MCF 10A (cell line): ENCODE measurements at regions of chr15 and their contacts with region 1.

Region 1: GRCh38 chr15:100918034-100918689 is 995 bp upstream of the LRRK1 start:
- DNase-seq: peak; percentile 85
- H3K4me3 Mint-ChIP-seq: peak overlapping the region; percentile 91
- H3K27ac Mint-ChIP-seq: peak overlapping the region; percentile 64
- H3K4me1 Mint-ChIP-seq: peaks cover 19% of the 10 kb centered on the region
- H3K27me3 Mint-ChIP-seq: no peaks in the 10 kb centered on the region
- CTCF ChIP-seq: peak; percentile 89

Region 2: GRCh38 chr15:100588638-100589242 is 329.4 kb before region 1 on chr15:
- CTCF ChIA-PET with region 1: no interaction called
- POLR2A ChIA-PET with region 1: no interaction called
- intact Hi-C with region 1: no loop called
- DNase-seq: peak; percentile 28
- H3K4me3 Mint-ChIP-seq: no peak overlapping the region
- H3K27ac Mint-ChIP-seq: no peak overlapping the region
- H3K4me1 Mint-ChIP-seq: no peaks in the 10 kb centered on the region
- H3K27me3 Mint-ChIP-seq: no peaks in the 10 kb centered on the region
- CTCF ChIP-seq: no peak

Region 3: DNA sequence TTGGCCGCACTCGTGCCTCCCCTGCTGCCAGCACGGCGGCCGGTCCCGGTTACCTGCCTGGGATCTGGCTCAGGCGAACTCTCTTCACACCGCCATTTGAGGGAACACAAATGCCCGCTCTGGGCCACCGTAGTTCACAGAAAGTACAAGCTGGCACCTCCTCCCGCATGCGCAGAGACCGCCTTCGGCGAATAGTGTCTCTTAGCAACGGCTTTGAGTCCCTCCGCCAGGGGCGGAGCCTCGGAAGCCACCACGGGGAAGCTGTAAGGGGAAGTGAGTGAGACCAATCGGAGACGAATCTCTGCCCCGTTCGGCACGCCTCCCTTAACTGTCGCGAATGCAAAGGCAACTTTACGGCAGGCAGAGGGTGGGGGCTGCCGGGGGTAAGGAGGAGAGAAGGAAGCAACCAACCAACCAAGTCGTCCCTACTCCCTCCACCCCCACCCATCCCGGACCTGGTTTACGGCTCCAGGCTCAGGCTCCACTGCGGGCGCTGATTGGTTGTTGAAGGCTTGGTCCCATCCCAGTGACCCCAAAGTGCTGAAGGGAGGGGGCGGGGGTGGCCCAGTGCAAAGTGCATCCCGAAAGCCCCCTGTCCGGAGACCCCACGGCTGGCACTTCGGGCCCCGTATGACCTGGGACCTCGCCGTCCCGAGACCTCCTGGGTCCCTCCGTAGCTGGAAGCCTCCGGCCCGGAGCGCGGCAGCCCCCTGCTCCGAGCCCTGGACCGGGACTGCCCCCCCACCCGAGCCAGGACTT is 315.9 kb before region 1 on chr15 and contains the starts of genes ASB7 and LINS1:
- CTCF ChIA-PET with region 1: interaction called, 7 read pairs
- POLR2A ChIA-PET with region 1: interaction called, 12 read pairs
- intact Hi-C with region 1: no loop called
- DNase-seq: peak; percentile 100
- H3K4me3 Mint-ChIP-seq: no peak within 1 kb of the TSS
- H3K27ac Mint-ChIP-seq: no peak within 1 kb of the TSS
- H3K4me1 Mint-ChIP-seq: peaks cover 22% of the 10 kb centered on the region
- H3K27me3 Mint-ChIP-seq: no peaks in the 10 kb centered on the region
- CTCF ChIP-seq: no peak
- total RNA-seq, gene ASB7: 14.3 and 19.2 TPM in 2 replicates
- total RNA-seq, gene LINS1: 13.9 and 15.1 TPM in 2 replicates

Region 4: GRCh38 chr15:100879464-100880138 is 38.6 kb before region 1 on chr15 and contains the start of gene ALDH1A3:
- CTCF ChIA-PET with region 1: interaction called, 8 read pairs
- POLR2A ChIA-PET with region 1: no interaction called
- intact Hi-C with region 1: loop called (anchors 5 kb)
- DNase-seq: peak; percentile 81
- H3K4me3 Mint-ChIP-seq: peak within 1 kb of the TSS; percentile 63
- H3K27ac Mint-ChIP-seq: no peak within 1 kb of the TSS
- H3K4me1 Mint-ChIP-seq: no peaks in the 10 kb centered on the region
- H3K27me3 Mint-ChIP-seq: no peaks in the 10 kb centered on the region
- CTCF ChIP-seq: no peak
- total RNA-seq, gene ALDH1A3: 3.4 and 4.3 TPM in 2 replicates

Region 5: DNA sequence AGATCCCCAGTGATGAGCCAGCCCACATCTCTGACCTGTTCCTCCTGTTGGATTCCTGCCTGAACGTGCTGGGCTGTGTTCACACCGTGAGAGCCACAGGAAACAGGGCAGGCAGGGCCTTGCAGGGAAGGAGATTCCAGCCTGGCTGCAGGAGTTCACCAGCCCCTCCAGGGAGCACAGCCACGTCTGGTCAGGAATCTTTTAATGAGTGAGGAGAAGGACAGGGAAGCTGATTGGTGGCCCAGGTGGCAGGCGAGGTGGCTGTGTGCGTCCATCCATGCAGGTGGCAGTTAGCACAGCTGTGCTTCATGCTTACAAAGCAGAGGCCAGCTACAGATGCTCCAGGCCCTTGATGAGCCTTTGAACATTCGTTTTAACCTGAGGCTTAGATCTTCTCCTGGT is 11.5 kb after region 1 on chr15:
- CTCF ChIA-PET with region 1: interaction called, 18 read pairs
- POLR2A ChIA-PET with region 1: no interaction called
- intact Hi-C with region 1: no loop called
- DNase-seq: no peak
- H3K4me3 Mint-ChIP-seq: no peak overlapping the region
- H3K27ac Mint-ChIP-seq: peak overlapping the region; percentile 8
- H3K4me1 Mint-ChIP-seq: no peaks in the 10 kb centered on the region
- H3K27me3 Mint-ChIP-seq: no peaks in the 10 kb centered on the region
- CTCF ChIP-seq: no peak

Region 6: GRCh38 chr15:101008158-101009139 is 90.3 kb after region 1 on chr15:
- CTCF ChIA-PET with region 1: interaction called, 98 read pairs
- POLR2A ChIA-PET with region 1: interaction called, 21 read pairs
- intact Hi-C with region 1: loop called (anchors 1 kb)
- DNase-seq: peak; percentile 81
- H3K4me3 Mint-ChIP-seq: peak overlapping the region; percentile 72
- H3K27ac Mint-ChIP-seq: no peak overlapping the region
- H3K4me1 Mint-ChIP-seq: peaks cover 11% of the 10 kb centered on the region
- H3K27me3 Mint-ChIP-seq: no peaks in the 10 kb centered on the region
- CTCF ChIP-seq: peak; percentile 93

Region 7: DNA sequence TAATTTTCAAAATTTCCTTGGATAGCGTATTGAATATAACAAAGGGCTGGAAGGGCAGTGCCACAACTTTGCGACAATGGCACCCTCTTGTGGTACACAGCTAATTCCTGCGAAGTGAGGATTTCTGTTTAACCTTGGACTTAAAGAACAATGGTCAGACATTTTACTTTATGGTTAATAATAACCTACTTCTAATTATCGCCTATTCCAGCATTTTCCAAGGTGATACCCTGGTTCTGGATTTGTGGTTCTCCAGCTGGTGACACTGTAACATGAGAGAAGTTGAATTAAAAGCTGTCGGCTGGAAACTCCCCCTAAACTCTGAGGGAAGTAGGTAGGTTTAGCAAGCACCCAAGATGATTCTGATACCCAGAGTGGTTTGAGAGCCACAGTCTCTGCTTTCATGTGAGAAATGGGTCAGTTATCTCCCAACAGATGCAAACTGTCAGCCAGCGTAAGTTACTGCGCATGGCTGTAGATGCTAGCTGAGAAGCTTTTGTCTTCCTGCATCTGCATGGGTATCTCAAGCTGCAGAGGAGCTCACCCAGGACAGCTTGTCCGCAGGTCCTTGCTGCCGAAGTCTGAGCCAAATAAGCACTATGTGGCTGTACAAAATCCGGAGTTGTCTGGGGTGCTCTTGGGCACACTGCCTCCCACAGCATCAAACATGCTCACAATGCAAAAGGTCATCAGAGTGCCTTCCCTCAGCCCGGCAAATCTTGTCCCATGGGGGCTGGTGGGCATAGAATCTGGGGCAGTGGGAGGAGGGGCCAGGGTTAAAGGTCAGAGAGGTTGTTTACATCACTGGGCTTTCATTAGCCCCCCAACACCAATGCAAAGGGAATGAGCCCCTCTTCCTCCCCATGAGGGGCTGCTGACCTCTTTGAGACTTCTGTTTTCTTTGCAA is 340.3 kb after region 1 on chr15:
- CTCF ChIA-PET with region 1: interaction called, 8 read pairs
- POLR2A ChIA-PET with region 1: interaction called, 4 read pairs
- intact Hi-C with region 1: loop called (anchors 5 kb)
- DNase-seq: peak; percentile 77
- H3K4me3 Mint-ChIP-seq: no peak overlapping the region
- H3K27ac Mint-ChIP-seq: no peak overlapping the region
- H3K4me1 Mint-ChIP-seq: peaks cover 5% of the 10 kb centered on the region
- H3K27me3 Mint-ChIP-seq: no peaks in the 10 kb centered on the region
- CTCF ChIP-seq: peak; percentile 85